Activated naive CD8-positive, alpha-beta T cell treated with anti-CD3 and anti-CD28 coated beads, Interleukin-2, amount 10 ng/mL, durations not matched to agents 7 days and 5 days (primary cell): ENCODE measurements at regions of chr22 and their contacts with region 1.

Region 1: DNA sequence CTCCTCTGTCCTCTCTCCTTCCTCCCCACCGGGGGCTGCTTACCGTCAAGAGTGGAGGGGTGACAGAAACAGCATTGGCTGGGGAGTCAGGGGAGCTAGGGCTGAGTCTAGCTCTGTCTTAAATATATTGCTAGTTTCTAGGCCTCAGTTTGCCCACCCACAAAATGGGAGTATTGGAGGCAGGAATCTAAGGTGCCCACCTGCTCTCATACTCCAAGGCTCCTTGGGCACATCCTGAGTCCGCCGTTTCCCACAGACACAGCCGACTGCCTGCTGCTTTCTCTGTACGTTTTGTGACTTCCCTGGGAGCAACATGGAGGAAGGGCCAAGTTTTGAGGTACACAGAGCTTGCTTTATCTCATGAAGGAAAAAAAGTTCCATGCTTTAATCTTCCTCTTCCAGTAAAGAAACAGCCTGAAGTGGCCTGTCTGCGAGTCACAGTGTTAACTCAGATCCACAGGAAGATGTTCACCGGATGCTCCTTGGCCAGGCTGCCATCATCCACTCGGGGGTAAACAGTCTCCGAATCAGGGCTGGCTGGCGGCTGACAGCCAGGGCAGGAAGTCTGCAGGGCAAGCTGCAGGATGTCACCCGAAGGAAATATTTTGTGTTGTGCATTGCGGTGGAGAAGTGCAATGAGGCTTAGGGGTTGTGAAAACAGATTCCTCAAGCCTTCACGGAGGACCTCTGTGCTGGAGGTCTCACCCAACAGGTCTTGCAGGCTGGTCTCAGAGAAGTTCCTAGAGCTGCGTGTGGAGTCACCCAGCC is 11.0 kb upstream of the CERK start:
- DNase-seq: peak; percentile 68
- ATAC-seq: peak; percentile 97
- H3K4me3 Mint-ChIP-seq: peak overlapping the region; percentile 71
- H3K27ac Mint-ChIP-seq: peak overlapping the region; percentile 97
- H3K4me1 Mint-ChIP-seq: peaks cover 22% of the 10 kb centered on the region
- H3K27me3 Mint-ChIP-seq: peaks cover 3% of the 10 kb centered on the region

Region 2: DNA sequence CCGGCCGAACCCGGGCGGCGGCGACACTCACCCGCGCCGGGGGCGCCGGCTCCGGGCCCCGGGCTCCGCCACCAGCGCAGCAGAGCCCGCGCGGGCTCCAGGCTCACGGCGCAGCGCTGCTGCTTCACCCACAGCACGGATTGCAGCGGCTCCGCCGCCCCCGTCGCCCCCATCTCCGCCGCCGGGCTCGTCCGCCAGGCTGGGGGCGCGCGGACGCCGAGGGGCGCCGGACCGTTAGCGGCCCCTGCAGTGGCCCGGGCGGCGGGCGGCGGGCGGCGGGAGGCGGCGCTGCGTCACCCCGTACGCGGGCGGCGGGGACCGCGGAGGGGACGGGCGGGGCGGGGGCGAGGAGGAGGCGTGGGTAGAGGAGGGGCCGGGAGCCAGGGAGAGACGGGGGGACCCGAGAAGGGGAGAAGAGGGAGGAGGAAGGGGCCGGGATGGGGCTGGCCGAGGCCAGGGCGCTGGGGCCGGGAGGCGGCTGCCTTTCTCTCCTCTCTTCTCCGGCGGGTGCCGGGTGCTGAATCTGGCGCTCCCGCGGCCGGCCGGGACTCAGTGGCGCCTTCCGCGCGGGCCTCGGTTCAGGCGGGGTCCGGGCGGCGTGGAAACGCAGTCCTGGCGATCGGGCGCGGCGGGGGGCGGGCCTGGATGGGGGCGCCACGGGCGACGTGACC is 11.0 kb before region 1 on chr22 and contains the start of gene CERK:
- POLR2A ChIA-PET with region 1: interaction called, 18 read pairs
- DNase-seq: peak; percentile 75
- ATAC-seq: peak; percentile 57
- H3K4me3 Mint-ChIP-seq: peak within 1 kb of the TSS; percentile 100
- H3K27ac Mint-ChIP-seq: peak within 1 kb of the TSS; percentile 96
- H3K4me1 Mint-ChIP-seq: peaks cover 34% of the 10 kb centered on the region
- H3K27me3 Mint-ChIP-seq: no peaks in the 10 kb centered on the region
- total RNA-seq, gene CERK: 90.8 to 94.9 TPM

Region 3: DNA sequence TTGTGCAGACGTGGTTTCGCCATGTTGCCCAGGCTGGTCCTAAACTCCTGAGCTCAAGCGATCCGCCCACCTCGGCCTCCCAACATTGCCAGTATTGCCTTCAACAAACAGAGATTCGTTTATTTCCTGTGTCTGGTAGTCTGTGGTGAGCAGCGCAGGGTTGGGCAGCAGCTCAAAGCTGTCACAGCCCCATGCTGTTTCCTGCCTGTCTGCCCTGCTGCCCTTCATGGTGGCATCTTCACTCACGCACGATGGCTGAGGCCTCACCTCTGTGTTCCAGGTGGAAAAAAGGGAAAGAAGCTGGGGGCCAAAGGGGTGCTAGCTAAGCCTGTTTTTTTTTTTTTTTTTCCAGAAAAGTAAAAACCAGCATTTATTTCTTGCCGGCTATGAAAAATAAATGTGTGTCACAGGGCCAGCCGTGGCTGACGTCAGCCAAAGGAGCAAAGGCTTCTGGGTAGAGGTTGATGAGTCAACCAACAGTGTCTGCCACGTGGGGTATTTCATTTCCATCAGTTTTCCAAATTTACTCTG is 42.2 kb after region 1 on chr22:
- POLR2A ChIA-PET with region 1: interaction called, 10 read pairs
- DNase-seq: peak; percentile 73
- ATAC-seq: peak; percentile 97
- H3K4me3 Mint-ChIP-seq: peak overlapping the region; percentile 85
- H3K27ac Mint-ChIP-seq: peak overlapping the region; percentile 99
- H3K4me1 Mint-ChIP-seq: peaks cover 42% of the 10 kb centered on the region
- H3K27me3 Mint-ChIP-seq: no peaks in the 10 kb centered on the region